Activated B cell treated with CpG ODN at 0.5 μM for 24 hours (primary cell): ENCODE measurements at regions of chr1 and their contacts with region 1.

Region 1: GRCh38 chr1:180502360-180503273 is at the start of gene ACBD6:
- DNase-seq: peak; percentile 82
- ATAC-seq: peak; percentile 83
- H3K4me3 Mint-ChIP-seq: peak within 1 kb of the TSS; percentile 96
- H3K27ac Mint-ChIP-seq: peak within 1 kb of the TSS; percentile 98
- H3K4me1 Mint-ChIP-seq: peaks cover 30% of the 10 kb centered on the region
- H3K27me3 Mint-ChIP-seq: no peaks in the 10 kb centered on the region
- CTCF ChIP-seq: no peak
- total RNA-seq, gene ACBD6: 55.4 and 61.5 TPM in 2 replicates

Region 2: GRCh38 chr1:180154325-180155181 is 348.1 kb before region 1 on chr1 and contains the start of gene QSOX1:
- CTCF ChIA-PET with region 1: no interaction called
- POLR2A ChIA-PET with region 1: interaction called, 3 read pairs
- intact Hi-C with region 1: loop called (anchors 1 kb)
- DNase-seq: peak; percentile 79
- ATAC-seq: peak; percentile 97
- H3K4me3 Mint-ChIP-seq: peak within 1 kb of the TSS; percentile 96
- H3K27ac Mint-ChIP-seq: peak within 1 kb of the TSS; percentile 83
- H3K4me1 Mint-ChIP-seq: peaks cover 23% of the 10 kb centered on the region
- H3K27me3 Mint-ChIP-seq: no peaks in the 10 kb centered on the region
- CTCF ChIP-seq: no peak
- total RNA-seq, gene QSOX1: 11.9 and 12.9 TPM in 2 replicates

Region 3: GRCh38 chr1:180515864-180516388 is 13.3 kb after region 1 on chr1:
- CTCF ChIA-PET with region 1: interaction called, 6 read pairs
- POLR2A ChIA-PET with region 1: interaction called, 7 read pairs
- intact Hi-C with region 1: loop called (anchors 1 kb)
- DNase-seq: no peak
- ATAC-seq: peak; percentile 89
- H3K4me3 Mint-ChIP-seq: no peak overlapping the region
- H3K27ac Mint-ChIP-seq: no peak overlapping the region
- H3K4me1 Mint-ChIP-seq: no peaks in the 10 kb centered on the region
- H3K27me3 Mint-ChIP-seq: peaks cover 8% of the 10 kb centered on the region
- CTCF ChIP-seq: no peak

Region 4: GRCh38 chr1:182029379-182030331 is 1527.0 kb after region 1 on chr1:
- CTCF ChIA-PET with region 1: no interaction called
- POLR2A ChIA-PET with region 1: no interaction called
- intact Hi-C with region 1: loop called (anchors 2 kb)
- DNase-seq: peak; percentile 98
- ATAC-seq: peak; percentile 94
- H3K4me3 Mint-ChIP-seq: peak overlapping the region; percentile 97
- H3K27ac Mint-ChIP-seq: peak overlapping the region; percentile 97
- H3K4me1 Mint-ChIP-seq: peaks cover 15% of the 10 kb centered on the region
- H3K27me3 Mint-ChIP-seq: no peaks in the 10 kb centered on the region
- CTCF ChIP-seq: no peak